ENCODE measurements at regions of chr3 and their contacts with region 1.

Region 1: GRCh38 chr3:195204360-195205163 is 66.4 kb downstream of the XXYLT1 start:
- DNase-seq: no peak
- ATAC-seq: peak; percentile 30
- H3K4me3 Mint-ChIP-seq: peak overlapping the region; percentile 25
- H3K27ac Mint-ChIP-seq: peak overlapping the region; percentile 82
- H3K4me1 Mint-ChIP-seq: peaks cover 31% of the 10 kb centered on the region
- H3K27me3 Mint-ChIP-seq: no peaks in the 10 kb centered on the region
- CTCF ChIP-seq: no peak

Region 2: GRCh38 chr3:195187609-195188425 is 16.7 kb before region 1 on chr3:
- CTCF ChIA-PET with region 1: no interaction called
- POLR2A ChIA-PET with region 1: interaction called, 9 read pairs
- intact Hi-C with region 1: loop called (anchors 2 kb)
- DNase-seq: no peak
- ATAC-seq: no peak
- H3K4me3 Mint-ChIP-seq: no peak overlapping the region
- H3K27ac Mint-ChIP-seq: no peak overlapping the region
- H3K4me1 Mint-ChIP-seq: peaks cover 25% of the 10 kb centered on the region
- H3K27me3 Mint-ChIP-seq: no peaks in the 10 kb centered on the region
- CTCF ChIP-seq: no peak